Activated CD4-positive, alpha-beta memory T cell treated with anti-CD3 and anti-CD28 coated beads for 36 hours (primary cell): ENCODE measurements at regions of chr11 and their contacts with region 1.

Region 1: GRCh38 chr11:48172818-48173609 is 43.6 kb upstream of the OR4B1 start:
- DNase-seq: peak; percentile 78
- H3K4me3 Mint-ChIP-seq: no peak overlapping the region
- H3K27ac Mint-ChIP-seq: no peak overlapping the region
- H3K4me1 Mint-ChIP-seq: peaks cover 23% of the 10 kb centered on the region
- H3K27me3 Mint-ChIP-seq: no peaks in the 10 kb centered on the region

Region 2: DNA sequence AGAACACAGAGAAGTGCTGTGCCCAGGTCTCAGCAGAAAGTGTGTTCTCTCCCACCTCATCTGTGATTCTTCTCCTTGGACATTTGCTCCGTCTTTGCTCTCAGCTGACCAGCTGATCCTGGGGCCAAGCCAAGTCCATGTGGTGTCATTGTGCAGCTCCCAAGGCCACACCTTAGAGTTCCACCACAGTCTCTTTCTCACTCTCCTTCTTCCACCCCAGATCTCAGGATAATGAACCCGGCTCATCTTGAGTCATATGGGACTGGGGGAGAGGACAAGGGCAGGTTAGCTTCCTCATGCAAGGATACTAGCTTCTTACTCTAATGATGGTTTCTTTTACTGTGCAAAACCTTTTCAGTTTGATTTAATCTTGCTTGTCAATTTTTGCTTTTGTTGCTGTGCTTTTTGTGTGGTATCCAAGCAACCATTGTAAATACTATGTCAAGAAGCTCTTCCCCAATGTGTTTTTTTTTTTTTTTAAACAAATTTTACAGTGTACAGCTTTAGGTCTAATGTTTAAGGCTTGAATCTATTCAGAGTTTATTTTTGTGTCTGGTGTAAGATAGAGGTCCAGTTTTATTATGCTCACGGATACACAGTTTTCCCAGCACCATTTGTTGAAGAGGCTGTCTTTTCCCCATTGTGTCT is 31.4 kb before region 1 on chr11:
- CTCF ChIA-PET with region 1: no interaction called
- POLR2A ChIA-PET with region 1: no interaction called
- intact Hi-C with region 1: no loop called
- DNase-seq: no peak
- H3K4me3 Mint-ChIP-seq: no peak overlapping the region
- H3K27ac Mint-ChIP-seq: no peak overlapping the region
- H3K4me1 Mint-ChIP-seq: peaks cover 13% of the 10 kb centered on the region
- H3K27me3 Mint-ChIP-seq: no peaks in the 10 kb centered on the region

Region 3: GRCh38 chr11:48161951-48162884 is 10.8 kb before region 1 on chr11:
- CTCF ChIA-PET with region 1: interaction called, 13 read pairs
- POLR2A ChIA-PET with region 1: no interaction called
- intact Hi-C with region 1: no loop called
- DNase-seq: no peak
- H3K4me3 Mint-ChIP-seq: no peak overlapping the region
- H3K27ac Mint-ChIP-seq: peak overlapping the region; percentile 25
- H3K4me1 Mint-ChIP-seq: no peaks in the 10 kb centered on the region
- H3K27me3 Mint-ChIP-seq: no peaks in the 10 kb centered on the region

Region 4: DNA sequence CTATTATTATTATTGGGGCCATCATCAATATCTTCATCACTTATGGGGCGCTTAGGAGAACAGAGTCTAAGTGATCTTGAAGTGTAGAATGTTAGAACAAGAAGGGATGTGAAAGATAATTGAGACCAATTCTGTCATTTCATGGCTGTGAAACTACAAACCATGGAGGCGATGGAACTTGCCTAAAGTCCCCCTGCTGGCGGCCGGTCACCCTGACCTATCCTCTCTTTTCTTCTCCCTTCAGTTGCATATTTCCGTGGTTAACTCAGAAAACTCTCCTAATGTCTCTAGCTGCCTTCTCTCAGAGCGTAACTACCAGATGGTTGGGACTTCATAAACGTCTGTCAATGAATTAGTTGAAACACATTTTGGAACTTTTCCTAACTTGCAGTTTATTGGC is 37.0 kb after region 1 on chr11:
- CTCF ChIA-PET with region 1: interaction called, 5 read pairs
- POLR2A ChIA-PET with region 1: no interaction called
- intact Hi-C with region 1: loop called (anchors 1 kb)
- DNase-seq: no peak
- H3K4me3 Mint-ChIP-seq: no peak overlapping the region
- H3K27ac Mint-ChIP-seq: no peak overlapping the region
- H3K4me1 Mint-ChIP-seq: no peaks in the 10 kb centered on the region
- H3K27me3 Mint-ChIP-seq: peaks cover 3% of the 10 kb centered on the region

Region 5: GRCh38 chr11:48307760-48308386 is 134.9 kb after region 1 on chr11:
- CTCF ChIA-PET with region 1: interaction called, 10 read pairs
- POLR2A ChIA-PET with region 1: no interaction called
- intact Hi-C with region 1: loop called (anchors 5 kb)
- DNase-seq: peak; percentile 78
- H3K4me3 Mint-ChIP-seq: no peak overlapping the region
- H3K27ac Mint-ChIP-seq: no peak overlapping the region
- H3K4me1 Mint-ChIP-seq: no peaks in the 10 kb centered on the region
- H3K27me3 Mint-ChIP-seq: peaks cover 2% of the 10 kb centered on the region